ENCODE measurements at regions of chr5 and their contacts with region 1.

Region 1: GRCh38 chr5:59193616-59194319 is 610.9 kb downstream of the RAB3C start:
- DNase-seq: no peak
- H3K4me3 ChIP-seq: no peak overlapping the region
- H3K27ac ChIP-seq: peak overlapping the region; percentile 14 to 61 (median 26)
- H3K4me1 ChIP-seq: peaks cover 0 to 19% (median 9%) of the 10 kb centered on the region in 4 donors
- H3K27me3 ChIP-seq: no peaks in the 10 kb centered on the region
- CTCF ChIP-seq: no peak
- EP300 ChIP-seq: peak; percentile 73
- POLR2A ChIP-seq: no peak

Region 2: DNA sequence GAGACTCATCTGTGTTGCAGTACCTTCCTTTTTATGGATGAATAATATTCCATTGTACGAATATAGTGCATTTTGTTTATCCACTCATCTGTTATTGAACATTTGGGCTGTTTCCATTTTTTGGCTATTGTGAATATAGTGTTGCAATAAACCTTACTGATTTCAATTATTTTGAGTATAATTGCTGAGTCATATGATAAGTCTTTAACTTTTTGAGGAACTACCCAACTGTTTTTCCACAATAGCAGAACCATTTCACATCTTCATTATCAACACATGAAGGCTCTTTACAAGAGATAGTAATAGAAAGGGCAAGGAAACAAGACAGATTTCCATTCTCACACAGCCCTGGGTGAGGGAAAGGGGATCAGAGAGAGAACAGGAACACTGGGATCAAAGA is 281.7 kb before region 1 on chr5:
- in situ Hi-C with region 1: no loop called
- intact Hi-C with region 1: no loop called
- DNase-seq: no peak
- H3K4me3 ChIP-seq: no peak overlapping the region
- H3K27ac ChIP-seq: no peak overlapping the region
- H3K4me1 ChIP-seq: no peaks in the 10 kb centered on the region
- H3K27me3 ChIP-seq: no peaks in the 10 kb centered on the region
- CTCF ChIP-seq: no peak
- EP300 ChIP-seq: no peak
- POLR2A ChIP-seq: no peak

Region 3: DNA sequence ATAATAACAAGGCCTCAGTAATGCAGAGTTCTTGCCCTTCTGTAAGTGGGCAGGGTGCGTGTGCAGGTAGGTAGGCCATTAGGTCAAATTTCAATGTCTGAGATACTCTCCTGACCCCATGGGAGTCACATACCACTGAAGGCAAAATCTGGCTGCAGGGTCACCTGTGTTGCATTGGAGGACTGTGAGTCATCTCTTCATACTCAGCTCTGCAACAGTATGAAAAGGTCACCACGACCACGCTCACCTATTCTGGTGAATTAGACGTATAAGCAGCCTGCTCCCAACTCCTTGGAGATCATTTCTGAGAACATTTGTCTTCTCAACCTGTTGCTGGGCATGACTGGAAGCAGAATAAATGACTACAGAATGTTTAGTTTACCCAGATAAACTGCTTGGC is 99.9 kb after region 1 on chr5:
- in situ Hi-C with region 1: no loop called
- intact Hi-C with region 1: no loop called
- DNase-seq: no peak
- H3K4me3 ChIP-seq: no peak overlapping the region
- H3K27ac ChIP-seq: peak overlapping the region in 2 of 4 donors; percentile 42 to 84
- H3K4me1 ChIP-seq: peaks cover 4 to 26% (median 12%) of the 10 kb centered on the region in 4 donors
- H3K27me3 ChIP-seq: no peaks in the 10 kb centered on the region
- CTCF ChIP-seq: no peak
- EP300 ChIP-seq: no peak
- POLR2A ChIP-seq: no peak

Region 4: GRCh38 chr5:59360130-59360555 is 166.4 kb after region 1 on chr5:
- in situ Hi-C with region 1: no loop called
- intact Hi-C with region 1: loop called (anchors 5 kb)
- DNase-seq: no peak
- H3K4me3 ChIP-seq: no peak overlapping the region
- H3K27ac ChIP-seq: peak overlapping the region; percentile 34 to 69 (median 52)
- H3K4me1 ChIP-seq: peaks cover 0 to 28% (median 2%) of the 10 kb centered on the region in 4 donors
- H3K27me3 ChIP-seq: no peaks in the 10 kb centered on the region
- CTCF ChIP-seq: no peak
- EP300 ChIP-seq: no peak
- POLR2A ChIP-seq: no peak

Region 5: DNA sequence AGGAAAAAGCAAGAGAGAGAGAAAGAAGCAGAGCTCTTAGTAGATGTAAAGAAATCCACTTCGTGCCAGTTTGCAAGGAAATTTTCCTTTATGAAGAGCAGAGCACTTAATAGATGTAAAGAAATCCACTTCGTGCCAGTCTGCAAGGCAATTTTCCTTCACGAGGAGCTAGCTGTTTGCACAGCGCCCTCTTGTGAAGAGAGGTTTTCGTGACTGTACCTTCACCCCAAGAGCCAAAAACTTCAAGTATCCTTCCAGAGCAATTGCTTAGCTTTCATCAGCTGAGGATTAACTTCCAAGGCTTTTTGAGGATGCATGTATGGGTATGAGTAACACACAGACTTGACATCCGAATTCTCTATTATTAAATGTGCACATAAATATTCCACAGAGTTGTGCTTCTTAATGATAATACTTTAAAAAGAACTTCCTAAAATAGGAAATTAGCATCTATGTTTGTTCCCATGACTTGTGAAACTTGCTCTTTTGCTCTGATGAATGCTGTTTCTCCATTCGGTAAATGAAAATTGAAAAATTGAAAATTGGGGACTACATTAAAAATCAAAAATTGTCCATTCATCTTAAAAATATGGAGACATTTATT is 174.1 kb after region 1 on chr5:
- in situ Hi-C with region 1: loop called in 2 of 4 experiments (anchors 10 kb)
- intact Hi-C with region 1: loop called (anchors 5 kb)
- DNase-seq: peak; percentile 66
- H3K4me3 ChIP-seq: no peak overlapping the region
- H3K27ac ChIP-seq: peak overlapping the region in 1 of 4 donors; percentile 43
- H3K4me1 ChIP-seq: peaks cover 0 to 11% (median 6%) of the 10 kb centered on the region in 4 donors
- H3K27me3 ChIP-seq: no peaks in the 10 kb centered on the region
- CTCF ChIP-seq: peak; percentile 58 to 73 (median 65)
- EP300 ChIP-seq: no peak
- POLR2A ChIP-seq: no peak

Region 6: GRCh38 chr5:59380350-59380951 is 186.7 kb after region 1 on chr5:
- in situ Hi-C with region 1: loop called (anchors 5 to 10 kb)
- intact Hi-C with region 1: loop called (anchors 5 kb)
- DNase-seq: no peak
- H3K4me3 ChIP-seq: no peak overlapping the region
- H3K27ac ChIP-seq: peak overlapping the region; percentile 15 to 60 (median 34)
- H3K4me1 ChIP-seq: peaks cover 0 to 12% (median 0%) of the 10 kb centered on the region in 4 donors
- H3K27me3 ChIP-seq: no peaks in the 10 kb centered on the region
- CTCF ChIP-seq: peak; percentile 43 to 63 (median 56)
- EP300 ChIP-seq: no peak
- POLR2A ChIP-seq: no peak